HCT116 (cell line): ENCODE measurements at regions of chr19 and their contacts with region 1.

Region 1: GRCh38 chr19:14383661-14384555 is 2.7 kb downstream of the ADGRE5 start:
- DNase-seq: no peak
- ATAC-seq: no peak
- H3K4me3 ChIP-seq: peak overlapping the region; percentile 77 to 96
- H3K27ac ChIP-seq: peak overlapping the region; percentile 97
- H3K4me1 ChIP-seq: peaks cover 45 to 58% of the 10 kb centered on the region in 2 experiments
- H3K27me3 ChIP-seq: no peaks in the 10 kb centered on the region
- CTCF ChIP-seq: no peak
- POLR2A ChIP-seq: no peak
- RAD21 ChIP-seq: no peak

Region 2: GRCh38 chr19:14325863-14326262 is 58.0 kb before region 1 on chr19:
- CTCF ChIA-PET with region 1: no interaction called
- POLR2A ChIA-PET with region 1: no interaction called
- RAD21 ChIA-PET with region 1: no interaction called
- intact Hi-C with region 1: no loop called
- DNase-seq: no peak
- ATAC-seq: no peak
- H3K4me3 ChIP-seq: no peak overlapping the region
- H3K27ac ChIP-seq: no peak overlapping the region
- H3K4me1 ChIP-seq: peaks cover 0 to 7% of the 10 kb centered on the region in 2 experiments; a peak in 3 of 4 replicates
- H3K27me3 ChIP-seq: no peaks in the 10 kb centered on the region
- CTCF ChIP-seq: no peak
- POLR2A ChIP-seq: no peak
- RAD21 ChIP-seq: no peak

Region 3: DNA sequence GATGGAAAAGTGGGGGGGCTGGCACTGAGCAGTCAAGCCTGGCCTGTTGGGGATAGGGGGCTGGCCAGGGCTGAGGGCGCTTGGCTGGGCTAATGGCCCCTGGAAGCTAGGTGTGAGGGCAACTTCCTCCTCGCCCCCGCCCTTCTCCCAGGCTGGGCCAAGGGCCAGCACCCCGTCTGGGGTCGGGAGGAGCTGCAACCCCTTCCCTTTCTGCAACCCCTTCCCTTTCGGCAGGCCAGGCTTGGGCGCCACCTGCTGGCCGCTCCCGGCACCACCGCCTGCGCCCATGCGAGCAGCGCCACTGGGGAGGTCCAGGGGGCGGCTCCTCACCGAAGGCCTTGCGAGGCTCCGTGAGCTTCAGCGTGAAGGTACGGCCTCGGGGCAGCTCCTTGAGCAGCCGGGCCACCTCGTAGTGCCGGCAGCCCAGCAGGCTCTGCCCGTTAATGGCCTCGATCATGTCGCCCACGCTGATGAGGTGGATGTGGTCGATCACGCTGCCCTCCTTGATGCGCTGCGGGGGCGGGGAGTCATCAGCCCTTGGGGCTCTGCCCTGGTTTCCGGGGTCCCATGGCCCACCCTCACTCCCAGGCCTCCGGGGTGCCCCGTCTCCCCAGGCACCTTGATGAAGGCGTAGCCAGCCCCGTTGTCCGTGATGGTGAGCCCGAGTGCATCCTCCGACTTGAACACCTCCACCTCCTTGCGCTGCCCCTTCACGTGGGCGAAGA is 96.2 kb after region 1 on chr19:
- CTCF ChIA-PET with region 1: no interaction called
- POLR2A ChIA-PET with region 1: no interaction called
- RAD21 ChIA-PET with region 1: no interaction called
- intact Hi-C with region 1: no loop called
- DNase-seq: no peak
- ATAC-seq: peak; percentile 71
- H3K4me3 ChIP-seq: no peak overlapping the region
- H3K27ac ChIP-seq: peak overlapping the region; percentile 37; the same call in 1 of the 2 replicates
- H3K4me1 ChIP-seq: peaks cover 18 to 35% of the 10 kb centered on the region in 2 experiments; a peak in 3 of 4 replicates
- H3K27me3 ChIP-seq: no peaks in the 10 kb centered on the region
- CTCF ChIP-seq: peak; percentile 77 to 95 (median 94)
- POLR2A ChIP-seq: no peak
- RAD21 ChIP-seq: peak; percentile 77

Region 4: DNA sequence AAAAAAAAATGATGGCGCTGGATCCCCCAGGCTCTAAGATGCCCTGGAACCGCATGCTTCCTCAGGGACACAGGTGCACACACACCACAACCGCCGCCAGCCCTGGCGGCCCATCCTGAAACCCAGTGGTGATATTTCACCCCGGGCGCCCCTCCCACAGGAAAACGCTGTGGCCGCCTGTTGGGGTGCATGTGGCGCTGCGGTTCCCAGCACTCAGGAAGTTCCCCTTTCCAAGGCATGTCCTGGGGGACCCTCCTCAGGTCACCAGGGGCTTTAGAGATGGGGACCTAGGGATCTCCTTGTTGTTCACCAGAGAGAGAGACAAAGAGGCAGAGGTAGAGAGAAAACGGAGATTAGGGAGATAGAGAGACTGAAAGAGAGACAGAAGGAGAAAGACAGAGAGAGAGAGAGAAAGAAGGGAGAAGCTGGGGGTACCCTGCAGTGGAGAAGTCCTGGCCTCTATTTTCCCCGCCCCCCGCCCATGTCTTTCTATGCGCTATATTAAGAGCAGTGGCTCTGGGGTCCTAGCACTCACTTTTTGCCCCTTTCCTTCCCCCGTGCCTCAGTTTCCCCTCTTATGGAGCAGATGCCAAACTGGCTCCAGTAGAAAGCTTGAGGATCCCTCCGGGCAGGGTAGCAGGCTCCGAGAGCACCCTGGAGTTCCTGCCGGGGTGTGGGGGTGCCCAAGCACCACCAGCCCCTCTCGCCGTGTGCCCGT is 392.1 kb after region 1 on chr19:
- CTCF ChIA-PET with region 1: interaction called, 3 read pairs
- POLR2A ChIA-PET with region 1: interaction called, 16 read pairs
- RAD21 ChIA-PET with region 1: no interaction called
- intact Hi-C with region 1: no loop called
- DNase-seq: no peak
- ATAC-seq: peak; percentile 52
- H3K4me3 ChIP-seq: peak overlapping the region; percentile 74 to 80
- H3K27ac ChIP-seq: peak overlapping the region; percentile 58
- H3K4me1 ChIP-seq: peaks cover 6 to 8% of the 10 kb centered on the region in 2 experiments; a peak in 3 of 4 replicates
- H3K27me3 ChIP-seq: no peaks in the 10 kb centered on the region
- CTCF ChIP-seq: 0 out of 6 replicates have a peak, but pooled peaks of 1 of the 3 experiments have one; percentile 13
- POLR2A ChIP-seq: no peak
- RAD21 ChIP-seq: no peak